Kidney (tissue), 22 donors: ENCODE measurements at regions of chr9 and their contacts with region 1.

Region 1: GRCh38 chr9:72280913-72281500 is 84.0 kb downstream of the ZFAND5 start:
- DNase-seq: peak; percentile 69 to 82 (median 77)
- H3K4me3 ChIP-seq: no peak overlapping the region
- H3K27ac ChIP-seq: no peak overlapping the region
- H3K4me1 ChIP-seq: no peaks in the 10 kb centered on the region
- H3K27me3 ChIP-seq: no peaks in the 10 kb centered on the region
- CTCF ChIP-seq: peak; percentile 96

Region 2: DNA sequence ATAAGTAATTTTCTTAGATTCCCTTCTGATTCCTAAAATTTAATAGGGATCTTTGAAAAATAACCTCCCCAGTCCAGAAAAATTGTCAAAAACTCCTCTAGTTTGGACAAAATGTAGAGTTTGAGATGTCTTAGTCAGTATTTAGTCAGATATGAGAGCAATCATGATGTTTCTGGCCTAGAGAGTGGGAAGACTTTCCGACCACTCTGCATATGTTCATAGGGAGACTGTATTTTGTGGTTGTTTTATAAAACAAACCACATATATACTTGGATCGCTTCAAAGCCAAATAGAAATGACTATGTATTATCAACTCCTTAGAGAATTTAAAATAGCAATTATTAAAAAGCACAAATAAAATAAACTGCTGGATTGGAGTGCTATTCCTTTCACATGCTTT is 68.2 kb after region 1 on chr9:
- intact Hi-C with region 1: no loop called
- DNase-seq: no peak
- H3K4me3 ChIP-seq: no peak overlapping the region
- H3K27ac ChIP-seq: no peak overlapping the region
- H3K4me1 ChIP-seq: peaks cover 0 to 12% (median 0%) of the 10 kb centered on the region in 3 donors
- H3K27me3 ChIP-seq: no peaks in the 10 kb centered on the region
- CTCF ChIP-seq: no peak

Region 3: DNA sequence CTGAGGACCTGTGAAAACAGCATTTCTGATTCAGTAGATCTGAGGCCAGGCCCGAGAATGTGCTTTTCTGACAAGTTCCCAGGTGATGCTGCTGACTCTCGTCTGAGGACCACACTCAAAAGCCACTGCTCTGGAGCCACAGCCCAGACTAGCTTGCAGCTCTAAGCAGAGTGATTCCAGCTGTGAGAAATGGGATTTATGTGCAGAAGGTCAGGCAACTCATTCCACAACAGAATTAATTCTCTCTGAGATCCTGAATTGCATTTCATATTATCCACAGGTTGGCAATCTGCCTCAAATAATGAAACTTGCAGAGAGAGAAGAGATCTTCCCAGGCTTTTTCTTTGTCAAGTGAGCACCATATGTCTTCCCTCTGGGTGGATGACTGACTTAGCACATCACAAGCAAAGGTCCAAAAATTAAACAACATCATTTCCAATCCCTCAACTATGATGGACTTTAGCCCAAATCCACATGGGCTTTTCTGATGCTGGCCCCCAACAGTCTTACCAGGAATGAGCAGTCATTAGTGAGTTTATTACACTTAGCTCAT is 531.6 kb after region 1 on chr9:
- intact Hi-C with region 1: loop called (anchors 10 kb)
- DNase-seq: peak in 3 of 5 donors; percentile 46 to 80 (median 58)
- H3K4me3 ChIP-seq: no peak overlapping the region
- H3K27ac ChIP-seq: no peak overlapping the region
- H3K4me1 ChIP-seq: peaks cover 0 to 4% (median 0%) of the 10 kb centered on the region in 3 donors
- H3K27me3 ChIP-seq: no peaks in the 10 kb centered on the region
- CTCF ChIP-seq: no peak